ENCODE measurements at regions of chr5 and their contacts with region 1.

Region 1: GRCh38 chr5:11268891-11269290 is 507.9 kb upstream of the DAP start:
- DNase-seq: no peak
- ATAC-seq: no peak
- H3K4me3 ChIP-seq: no peak overlapping the region
- H3K27ac ChIP-seq: no peak overlapping the region
- H3K4me1 ChIP-seq: no peaks in the 10 kb centered on the region
- H3K27me3 ChIP-seq: peaks cover 34% of the 10 kb centered on the region
- CTCF ChIP-seq: no peak

Region 2: GRCh38 chr5:11334401-11334800 is 65.5 kb after region 1 on chr5:
- CTCF ChIA-PET with region 1: no interaction called
- POLR2A ChIA-PET with region 1: no interaction called
- intact Hi-C with region 1: loop called (anchors 2 kb)
- DNase-seq: peak; percentile 58
- ATAC-seq: no peak
- H3K4me3 ChIP-seq: no peak overlapping the region
- H3K27ac ChIP-seq: no peak overlapping the region
- H3K4me1 ChIP-seq: no peaks in the 10 kb centered on the region
- H3K27me3 ChIP-seq: peaks cover 8% of the 10 kb centered on the region
- CTCF ChIP-seq: peak; percentile 74

Region 3: DNA sequence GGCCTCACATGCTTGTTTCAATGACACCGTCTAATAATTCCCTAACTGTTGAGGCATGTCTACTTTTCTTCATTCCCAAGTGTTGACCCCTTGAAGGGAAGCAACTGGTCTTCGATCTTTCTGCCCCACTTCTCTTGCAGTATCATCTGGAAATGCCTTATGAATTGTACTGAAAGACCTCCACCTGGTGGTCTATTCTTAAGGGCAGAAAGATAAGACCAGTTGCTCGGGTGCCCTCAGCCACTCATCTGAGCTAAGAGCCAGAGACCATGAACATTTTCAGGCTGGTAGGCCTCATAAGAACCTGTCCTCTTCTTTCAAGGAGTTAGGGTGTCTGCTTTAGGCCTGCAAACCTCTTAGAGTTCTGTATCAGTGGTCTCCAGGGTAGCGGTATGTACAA is 92.9 kb after region 1 on chr5:
- CTCF ChIA-PET with region 1: no interaction called
- POLR2A ChIA-PET with region 1: no interaction called
- intact Hi-C with region 1: loop called (anchors 5 kb)
- DNase-seq: no peak
- ATAC-seq: no peak
- H3K4me3 ChIP-seq: no peak overlapping the region
- H3K27ac ChIP-seq: no peak overlapping the region
- H3K4me1 ChIP-seq: no peaks in the 10 kb centered on the region
- H3K27me3 ChIP-seq: peaks cover 22% of the 10 kb centered on the region; the same call in 1 of the 2 replicates
- CTCF ChIP-seq: no peak

Region 4: GRCh38 chr5:11483630-11484029 is 214.7 kb after region 1 on chr5:
- CTCF ChIA-PET with region 1: no interaction called
- POLR2A ChIA-PET with region 1: no interaction called
- intact Hi-C with region 1: loop called (anchors 2 kb)
- DNase-seq: peak; percentile 26
- ATAC-seq: no peak
- H3K4me3 ChIP-seq: no peak overlapping the region
- H3K27ac ChIP-seq: no peak overlapping the region
- H3K4me1 ChIP-seq: no peaks in the 10 kb centered on the region
- H3K27me3 ChIP-seq: peaks cover 13% of the 10 kb centered on the region; the same call in 1 of the 2 replicates
- CTCF ChIP-seq: no peak

Region 5: DNA sequence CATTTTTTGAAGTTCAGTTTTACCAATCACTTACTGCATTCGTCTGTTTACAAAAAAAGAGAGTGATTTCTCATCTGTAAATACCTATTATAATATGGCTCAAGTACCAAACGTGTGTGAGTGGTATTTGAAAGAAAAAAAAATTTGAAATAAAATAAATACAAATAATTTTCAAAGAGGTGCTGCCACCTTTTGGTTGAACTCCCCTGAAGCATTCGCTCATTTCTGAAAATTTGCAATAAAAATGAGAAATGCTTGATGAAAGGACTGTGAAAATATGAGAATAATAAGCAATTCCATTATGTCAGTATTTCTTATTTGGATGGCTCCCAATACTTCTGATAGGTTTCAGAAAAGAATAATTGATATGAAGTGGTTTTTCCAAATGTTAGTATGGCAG is 225.4 kb after region 1 on chr5:
- CTCF ChIA-PET with region 1: no interaction called
- POLR2A ChIA-PET with region 1: no interaction called
- intact Hi-C with region 1: loop called (anchors 1 kb)
- DNase-seq: peak; percentile 52
- ATAC-seq: no peak
- H3K4me3 ChIP-seq: no peak overlapping the region
- H3K27ac ChIP-seq: no peak overlapping the region
- H3K4me1 ChIP-seq: no peaks in the 10 kb centered on the region
- H3K27me3 ChIP-seq: no peaks in the 10 kb centered on the region
- CTCF ChIP-seq: peak; percentile 78

Region 6: DNA sequence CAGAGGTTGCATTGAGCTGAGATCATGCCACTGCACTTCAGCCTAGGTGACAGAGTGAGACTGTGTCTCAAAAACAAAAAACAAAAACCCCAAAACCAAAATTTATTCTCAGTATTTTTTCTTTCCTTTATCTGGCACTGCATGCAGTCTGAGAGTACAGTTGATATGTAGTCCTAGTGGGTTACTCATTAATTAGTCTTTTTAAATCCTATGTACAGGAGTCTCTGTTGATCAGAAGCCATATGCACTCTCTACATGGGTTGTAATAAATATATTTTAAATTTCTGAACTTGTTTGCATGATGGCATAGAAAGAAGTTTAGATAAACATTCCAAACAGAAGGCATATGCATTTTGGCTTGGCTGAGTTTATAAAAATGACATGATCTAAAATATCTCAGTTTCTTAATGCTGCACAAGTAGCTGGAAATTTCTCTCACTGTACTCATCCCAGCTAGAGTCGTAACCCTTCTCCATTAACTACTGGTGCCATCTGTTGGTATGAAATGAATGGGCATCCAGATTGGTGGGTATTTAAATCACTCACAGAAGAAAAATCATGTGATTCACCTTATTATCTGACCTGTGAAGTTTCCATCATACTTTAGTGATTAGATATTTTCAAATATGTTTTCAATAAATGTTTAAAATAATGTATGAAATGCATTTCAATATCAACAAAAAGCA is 350.6 kb after region 1 on chr5:
- CTCF ChIA-PET with region 1: no interaction called
- POLR2A ChIA-PET with region 1: no interaction called
- intact Hi-C with region 1: loop called (anchors 1 kb)
- DNase-seq: peak; percentile 59
- ATAC-seq: peak; percentile 62; the same call in 1 of the 2 replicates
- H3K4me3 ChIP-seq: no peak overlapping the region
- H3K27ac ChIP-seq: no peak overlapping the region
- H3K4me1 ChIP-seq: no peaks in the 10 kb centered on the region
- H3K27me3 ChIP-seq: no peaks in the 10 kb centered on the region
- CTCF ChIP-seq: peak; percentile 65

Region 7: DNA sequence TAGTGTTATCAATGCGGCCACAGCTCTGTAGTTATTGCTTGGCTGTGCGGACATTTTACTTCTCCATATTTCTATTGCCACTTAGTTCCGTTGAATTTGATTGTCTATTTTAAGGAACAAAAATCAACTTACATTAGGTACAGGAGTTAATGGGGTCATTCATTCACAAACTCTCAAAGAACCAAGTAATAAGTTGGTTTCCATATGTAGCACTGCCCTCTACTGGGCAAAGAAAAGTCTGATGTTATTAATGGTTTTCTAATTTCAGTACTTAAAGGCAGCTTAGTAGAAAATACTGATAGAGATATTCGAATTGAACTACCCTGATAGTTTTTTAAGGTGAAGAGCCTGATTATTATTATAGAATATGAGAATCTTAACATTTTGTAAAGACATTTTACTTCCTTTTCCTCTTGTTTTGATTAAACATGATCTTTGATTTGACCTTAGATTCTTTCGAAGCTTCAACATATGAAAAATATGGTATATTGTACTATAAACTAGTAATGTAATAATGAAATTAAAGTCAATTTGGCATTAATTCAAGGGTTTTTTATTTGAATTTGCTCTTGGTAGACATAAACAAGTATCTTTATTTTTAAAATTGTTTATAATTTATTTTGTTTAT is 754.8 kb after region 1 on chr5:
- CTCF ChIA-PET with region 1: no interaction called
- POLR2A ChIA-PET with region 1: no interaction called
- intact Hi-C with region 1: loop called (anchors 1 kb)
- DNase-seq: peak; percentile 93
- ATAC-seq: peak; percentile 38; the same call in 1 of the 2 replicates
- H3K4me3 ChIP-seq: no peak overlapping the region
- H3K27ac ChIP-seq: no peak overlapping the region
- H3K4me1 ChIP-seq: no peaks in the 10 kb centered on the region
- H3K27me3 ChIP-seq: no peaks in the 10 kb centered on the region
- CTCF ChIP-seq: peak; percentile 97

Measured in PC-3 (cell line).